Endothelial cell of umbilical vein (primary cell): ENCODE measurements at regions of chr1 and their contacts with region 1.

Region 1: GRCh38 chr1:243255791-243256512 is at the start of gene SDCCAG8:
- DNase-seq: peak; percentile 100
- H3K4me3 ChIP-seq: peak within 1 kb of the TSS; percentile 70 to 95 (median 92)
- H3K27ac ChIP-seq: peak within 1 kb of the TSS; percentile 86
- H3K4me1 ChIP-seq: peaks cover 25% of the 10 kb centered on the region
- H3K27me3 ChIP-seq: no peaks in the 10 kb centered on the region
- CTCF ChIP-seq: no peak
- POLR2A ChIP-seq: peak; percentile 57
- total RNA-seq, gene SDCCAG8: 25.7 and 29.4 TPM in 2 replicates

Region 2: DNA sequence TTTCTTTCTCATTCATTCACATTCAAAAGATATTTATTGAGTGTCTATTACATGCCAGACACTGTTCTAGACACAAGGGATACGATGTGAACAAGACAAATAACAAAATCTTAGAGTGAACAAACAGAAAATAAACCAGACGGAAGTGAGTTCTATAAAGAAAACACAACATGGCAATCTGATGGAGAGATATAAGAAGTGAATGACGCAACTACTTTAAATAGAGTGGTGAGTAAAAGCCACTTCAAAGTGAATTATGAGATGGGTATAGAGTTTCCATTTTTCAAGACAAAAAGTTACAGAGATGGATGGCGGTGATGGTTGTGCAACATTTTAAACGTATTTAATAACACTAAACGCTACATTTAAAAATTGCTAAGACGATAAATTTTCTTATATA is 76.2 kb before region 1 on chr1:
- CTCF ChIA-PET with region 1: no interaction called
- POLR2A ChIA-PET with region 1: no interaction called
- dilution Hi-C with region 1: no loop called
- intact Hi-C with region 1: loop called (anchors 10 kb)
- DNase-seq: peak; percentile 1
- H3K4me3 ChIP-seq: no peak overlapping the region
- H3K27ac ChIP-seq: no peak overlapping the region
- H3K4me1 ChIP-seq: no peaks in the 10 kb centered on the region
- H3K27me3 ChIP-seq: no peaks in the 10 kb centered on the region
- CTCF ChIP-seq: no peak
- POLR2A ChIP-seq: no peak

Region 3: DNA sequence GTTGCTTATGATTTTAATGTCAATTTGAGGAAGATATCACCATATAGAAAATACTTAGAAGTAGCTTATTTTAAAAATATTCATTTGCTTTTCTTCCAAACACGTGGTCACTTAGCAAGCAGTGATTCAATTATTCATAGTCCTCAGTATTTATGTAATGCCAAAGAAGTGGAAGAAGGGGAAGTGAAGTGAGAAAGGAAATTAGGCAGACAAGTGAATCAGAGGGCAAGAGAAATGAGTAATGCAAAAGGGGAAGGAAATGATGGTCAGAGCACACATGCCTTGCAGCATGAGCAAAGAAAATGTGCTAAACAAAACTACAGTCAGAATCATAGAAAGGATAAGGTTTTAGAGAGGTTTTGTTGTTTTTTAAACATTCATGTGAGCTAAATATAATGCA is 31.7 kb after region 1 on chr1:
- CTCF ChIA-PET with region 1: interaction called, 18 read pairs
- POLR2A ChIA-PET with region 1: interaction called, 19 read pairs
- dilution Hi-C with region 1: no loop called
- intact Hi-C with region 1: loop called (anchors 1 kb)
- DNase-seq: peak; percentile 95
- H3K4me3 ChIP-seq: peak overlapping the region in 1 of 3 experiments; percentile 0
- H3K27ac ChIP-seq: peak overlapping the region; percentile 98
- H3K4me1 ChIP-seq: peaks cover 46% of the 10 kb centered on the region
- H3K27me3 ChIP-seq: no peaks in the 10 kb centered on the region
- CTCF ChIP-seq: no peak
- POLR2A ChIP-seq: no peak

Region 4: GRCh38 chr1:243312952-243313634 is 57.1 kb after region 1 on chr1:
- CTCF ChIA-PET with region 1: no interaction called
- POLR2A ChIA-PET with region 1: no interaction called
- dilution Hi-C with region 1: no loop called
- intact Hi-C with region 1: loop called (anchors 2 kb)
- DNase-seq: no peak
- H3K4me3 ChIP-seq: no peak overlapping the region
- H3K27ac ChIP-seq: no peak overlapping the region
- H3K4me1 ChIP-seq: peaks cover 7% of the 10 kb centered on the region
- H3K27me3 ChIP-seq: no peaks in the 10 kb centered on the region
- CTCF ChIP-seq: no peak
- POLR2A ChIP-seq: no peak

Region 5: GRCh38 chr1:243390162-243390791 is 134.3 kb after region 1 on chr1:
- CTCF ChIA-PET with region 1: no interaction called
- POLR2A ChIA-PET with region 1: no interaction called
- dilution Hi-C with region 1: no loop called
- intact Hi-C with region 1: no loop called
- DNase-seq: peak; percentile 80
- H3K4me3 ChIP-seq: no peak overlapping the region
- H3K27ac ChIP-seq: peak overlapping the region; percentile 45
- H3K4me1 ChIP-seq: peaks cover 19% of the 10 kb centered on the region
- H3K27me3 ChIP-seq: no peaks in the 10 kb centered on the region
- CTCF ChIP-seq: no peak
- POLR2A ChIP-seq: no peak